ENCODE measurements at regions of chr5 and their contacts with region 1.

Region 1: GRCh38 chr5:171152382-171152781 is 156.7 kb upstream of the TLX3 start:
- DNase-seq: no peak
- ATAC-seq: no peak
- H3K4me3 ChIP-seq: no peak overlapping the region
- H3K27ac ChIP-seq: no peak overlapping the region
- H3K4me1 ChIP-seq: no peaks in the 10 kb centered on the region
- H3K27me3 ChIP-seq: no peaks in the 10 kb centered on the region
- CTCF ChIP-seq: peak in 1 of 12 donors; percentile 6
- POLR2A ChIP-seq: no peak

Region 2: GRCh38 chr5:170809551-170809950 is 342.8 kb before region 1 on chr5:
- intact Hi-C with region 1: loop called in 1 of 10 experiments (anchors 5 kb)
- DNase-seq: no peak
- ATAC-seq: peak in 3 of 4 donors; percentile 50 to 57 (median 55)
- H3K4me3 ChIP-seq: no peak overlapping the region
- H3K27ac ChIP-seq: no peak overlapping the region
- H3K4me1 ChIP-seq: no peaks in the 10 kb centered on the region
- H3K27me3 ChIP-seq: peaks cover 0 to 12% (median 0%) of the 10 kb centered on the region in 9 donors
- CTCF ChIP-seq: peak in 7 of 12 donors; percentile 13 to 46 (median 25)
- POLR2A ChIP-seq: no peak

Region 3: DNA sequence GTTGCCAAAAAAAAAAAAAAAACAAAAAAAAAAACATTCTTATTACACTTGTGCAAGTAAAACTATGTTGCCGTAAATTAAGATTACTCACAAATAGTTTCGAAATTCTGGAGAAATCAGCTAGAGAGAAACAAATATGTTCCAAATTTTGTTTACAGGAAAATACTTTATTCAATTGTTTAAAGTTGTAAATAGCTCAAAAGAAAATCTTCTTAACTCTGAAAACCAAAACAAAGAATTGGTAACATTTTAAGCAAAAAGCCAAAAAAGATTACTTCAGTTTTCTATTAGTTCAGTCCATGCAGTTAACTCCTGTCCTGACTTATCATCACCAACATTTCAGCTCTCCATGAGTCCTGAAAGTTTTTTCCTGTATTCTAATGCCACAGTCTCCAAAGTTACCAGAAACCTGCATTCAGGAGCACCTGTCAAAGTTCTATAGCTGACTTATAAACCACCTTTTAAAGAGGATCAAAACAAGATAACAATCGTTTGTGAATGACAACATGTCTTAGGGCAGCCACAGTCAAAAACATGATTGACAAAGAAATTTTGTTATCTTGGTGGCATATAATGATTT is 96.4 kb before region 1 on chr5:
- intact Hi-C with region 1: no loop called
- DNase-seq: no peak
- ATAC-seq: no peak
- H3K4me3 ChIP-seq: no peak overlapping the region
- H3K27ac ChIP-seq: no peak overlapping the region
- H3K4me1 ChIP-seq: no peaks in the 10 kb centered on the region
- H3K27me3 ChIP-seq: no peaks in the 10 kb centered on the region
- CTCF ChIP-seq: no peak
- POLR2A ChIP-seq: no peak

Region 4: DNA sequence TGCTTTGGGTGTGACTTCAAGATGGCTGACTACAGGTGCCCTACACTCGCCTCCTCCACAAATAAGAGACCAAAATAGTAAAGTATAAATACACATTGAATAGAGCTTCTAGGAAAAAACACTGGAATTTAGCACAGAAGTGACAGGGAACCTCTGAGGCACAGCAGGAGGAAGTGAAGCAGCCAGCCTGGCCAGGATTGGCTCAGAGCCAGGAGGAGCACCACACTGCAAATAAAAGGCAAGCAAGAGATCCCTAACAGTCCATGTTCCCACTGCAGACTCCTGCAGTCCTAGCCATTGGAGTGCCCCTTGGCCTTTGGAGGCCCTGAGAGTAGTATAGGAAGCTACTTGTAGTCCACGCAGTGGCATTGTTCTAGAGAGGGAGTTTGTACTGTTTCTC is 30.0 kb before region 1 on chr5:
- intact Hi-C with region 1: no loop called
- DNase-seq: no peak
- ATAC-seq: no peak
- H3K4me3 ChIP-seq: no peak overlapping the region
- H3K27ac ChIP-seq: no peak overlapping the region
- H3K4me1 ChIP-seq: no peaks in the 10 kb centered on the region
- H3K27me3 ChIP-seq: no peaks in the 10 kb centered on the region
- CTCF ChIP-seq: no peak
- POLR2A ChIP-seq: no peak

Region 5: DNA sequence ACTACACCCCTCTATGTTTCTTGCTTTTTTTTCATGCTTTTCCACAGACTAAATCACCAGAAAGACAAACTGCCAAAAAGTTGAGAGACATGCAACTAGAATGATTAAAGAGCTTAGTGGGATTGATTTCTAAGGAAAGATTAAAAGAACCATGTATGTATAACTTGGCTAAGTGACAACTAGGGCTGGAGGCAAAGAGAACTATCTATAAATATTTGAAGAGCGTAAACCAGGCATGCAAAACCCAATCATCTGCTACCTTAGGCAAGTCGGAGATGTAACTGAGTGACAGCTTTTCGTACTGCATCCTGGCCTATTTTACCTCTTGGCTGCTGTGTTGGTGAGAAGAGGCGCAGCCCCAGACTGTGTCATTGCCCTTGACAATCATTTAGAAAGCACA is 35.6 kb after region 1 on chr5:
- intact Hi-C with region 1: no loop called
- DNase-seq: no peak
- ATAC-seq: no peak
- H3K4me3 ChIP-seq: no peak overlapping the region
- H3K27ac ChIP-seq: no peak overlapping the region
- H3K4me1 ChIP-seq: no peaks in the 10 kb centered on the region
- H3K27me3 ChIP-seq: no peaks in the 10 kb centered on the region
- CTCF ChIP-seq: no peak
- POLR2A ChIP-seq: no peak

Region 6: GRCh38 chr5:171201310-171201709 is 48.9 kb after region 1 on chr5:
- intact Hi-C with region 1: no loop called
- DNase-seq: no peak
- ATAC-seq: no peak
- H3K4me3 ChIP-seq: no peak overlapping the region
- H3K27ac ChIP-seq: no peak overlapping the region
- H3K4me1 ChIP-seq: no peaks in the 10 kb centered on the region
- H3K27me3 ChIP-seq: peaks cover 0 to 6% (median 0%) of the 10 kb centered on the region in 9 donors
- CTCF ChIP-seq: no peak
- POLR2A ChIP-seq: no peak